ENCODE measurements at regions of chr6 and their contacts with region 1.

Region 1: DNA sequence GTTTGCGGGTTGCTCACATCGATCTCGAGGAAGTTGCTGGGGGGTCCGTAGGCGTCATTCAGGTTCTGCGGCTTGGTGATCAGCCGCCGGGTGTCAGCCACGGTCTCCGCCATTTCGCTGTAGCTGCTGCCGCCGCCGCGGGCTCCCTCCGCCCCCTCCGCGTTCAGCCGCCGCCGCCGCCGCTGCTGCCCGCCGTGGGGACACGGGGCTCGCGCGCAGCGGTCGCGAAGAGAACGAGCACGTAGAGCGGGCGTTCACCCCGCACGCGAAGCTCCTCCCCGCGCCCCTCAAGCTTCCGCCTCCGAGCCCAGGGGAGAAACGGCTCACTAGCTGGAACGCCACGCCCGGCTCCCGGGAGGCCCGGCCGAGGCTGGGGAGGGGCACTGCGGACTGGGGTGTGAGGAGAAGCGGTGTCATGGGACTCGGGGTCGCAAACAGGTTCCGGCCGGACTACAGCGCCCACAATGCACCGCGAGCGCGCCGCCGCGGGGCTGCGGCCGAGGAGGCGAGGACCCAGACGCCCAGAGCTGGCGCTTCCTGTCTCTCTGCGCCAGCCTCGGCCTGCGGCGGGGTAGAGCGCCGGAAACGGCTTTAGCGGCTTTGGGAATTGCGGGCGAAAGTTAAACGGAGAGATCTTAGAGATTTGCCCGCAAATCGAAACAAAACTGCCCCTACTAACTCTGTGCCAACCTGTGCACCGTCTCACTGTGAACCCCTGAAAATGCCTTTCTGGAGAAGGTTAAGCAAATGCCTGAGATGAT is at the start of gene SNX3:
- DNase-seq: peak; percentile 99
- ATAC-seq: peak; percentile 90
- H3K4me3 ChIP-seq: peak within 1 kb of the TSS; percentile 95 to 99 (median 96)
- H3K4me3 Mint-ChIP-seq: peak within 1 kb of the TSS; percentile 89
- H3K27ac ChIP-seq: peak within 1 kb of the TSS; percentile 91 to 97
- H3K27ac Mint-ChIP-seq: peak within 1 kb of the TSS; percentile 93
- H3K4me1 ChIP-seq: peaks cover 30 to 35% of the 10 kb centered on the region in 2 donors
- H3K4me1 Mint-ChIP-seq: peaks cover 30% of the 10 kb centered on the region
- H3K27me3 ChIP-seq: no peaks in the 10 kb centered on the region
- H3K27me3 Mint-ChIP-seq: no peaks in the 10 kb centered on the region
- CTCF ChIP-seq: no peak
- total RNA-seq, gene SNX3: 95.3 and 96.0 TPM in 2 replicates

Region 2: DNA sequence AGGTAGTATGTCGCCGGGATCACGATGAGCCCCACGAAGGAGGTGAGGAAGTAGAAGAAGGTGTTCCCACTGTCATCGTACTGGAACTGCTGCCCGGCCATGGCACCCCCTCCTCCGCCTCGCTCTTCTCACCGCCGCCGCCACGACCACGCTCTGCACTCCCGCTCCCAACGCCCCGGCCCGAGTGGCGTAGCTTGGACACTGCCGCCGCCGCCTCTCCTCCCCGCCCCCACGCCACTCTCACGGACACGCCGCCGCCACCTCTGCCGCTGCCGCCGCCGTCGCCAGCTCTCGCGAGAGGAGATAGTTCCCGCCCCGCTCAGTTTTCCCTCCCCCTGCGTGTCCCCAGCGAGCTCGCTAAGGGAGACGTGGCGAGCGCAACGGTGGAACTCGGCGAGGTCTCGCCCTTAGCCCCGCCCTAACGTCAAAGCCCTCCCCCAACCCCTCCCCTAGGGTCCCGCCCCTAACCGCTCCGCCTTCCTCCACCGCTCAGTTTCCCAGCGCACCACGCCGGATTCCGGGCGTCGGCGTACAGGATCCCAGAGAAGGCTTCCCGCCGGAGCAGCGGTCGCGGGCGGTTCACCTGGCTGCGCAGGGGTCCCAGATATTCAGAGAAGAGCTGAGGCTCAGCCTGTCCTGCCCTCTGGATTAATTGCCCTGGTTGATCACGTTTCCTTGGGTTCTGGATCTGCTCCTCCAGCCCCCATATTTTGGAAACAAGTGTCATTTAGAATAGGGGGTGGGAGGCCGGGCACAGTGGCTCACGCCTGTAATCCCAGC is 302.9 kb before region 1 on chr6 and contains the start of gene SEC63:
- CTCF ChIA-PET with region 1: no interaction called
- POLR2A ChIA-PET with region 1: no interaction called
- intact Hi-C with region 1: loop called (anchors 1 kb)
- DNase-seq: peak; percentile 96
- ATAC-seq: peak; percentile 97
- H3K4me3 ChIP-seq: peak within 1 kb of the TSS; percentile 71 to 96 (median 77)
- H3K4me3 Mint-ChIP-seq: peak within 1 kb of the TSS; percentile 94
- H3K27ac ChIP-seq: peak within 1 kb of the TSS; percentile 60 to 73
- H3K27ac Mint-ChIP-seq: peak within 1 kb of the TSS; percentile 94
- H3K4me1 ChIP-seq: peaks cover 12 to 21% of the 10 kb centered on the region in 2 donors
- H3K4me1 Mint-ChIP-seq: peaks cover 27% of the 10 kb centered on the region
- H3K27me3 ChIP-seq: no peaks in the 10 kb centered on the region
- H3K27me3 Mint-ChIP-seq: no peaks in the 10 kb centered on the region
- CTCF ChIP-seq: no peak
- total RNA-seq, gene SEC63: 74.2 and 79.5 TPM in 2 replicates

Region 3: GRCh38 chr6:108113557-108114519 is 147.2 kb before region 1 on chr6:
- CTCF ChIA-PET with region 1: no interaction called
- POLR2A ChIA-PET with region 1: no interaction called
- intact Hi-C with region 1: loop called (anchors 5 kb)
- DNase-seq: peak; percentile 72
- ATAC-seq: no peak
- H3K4me3 ChIP-seq: peak overlapping the region in 2 of 5 experiments; percentile 15 to 31
- H3K4me3 Mint-ChIP-seq: peak overlapping the region; percentile 85
- H3K27ac ChIP-seq: no peak overlapping the region
- H3K27ac Mint-ChIP-seq: no peak overlapping the region
- H3K4me1 ChIP-seq: peaks cover 45 to 51% of the 10 kb centered on the region in 2 donors
- H3K4me1 Mint-ChIP-seq: peaks cover 44% of the 10 kb centered on the region
- H3K27me3 ChIP-seq: peaks cover 0 to 72% (median 63%) of the 10 kb centered on the region in 4 experiments
- H3K27me3 Mint-ChIP-seq: peaks cover 71% of the 10 kb centered on the region
- CTCF ChIP-seq: peak; percentile 74

Region 4: GRCh38 chr6:108294727-108295625 is 34.0 kb after region 1 on chr6 and contains the start of gene AFG1L:
- CTCF ChIA-PET with region 1: interaction called, 12 read pairs
- POLR2A ChIA-PET with region 1: interaction called, 35 read pairs
- intact Hi-C with region 1: loop called (anchors 1 kb)
- DNase-seq: peak; percentile 93
- ATAC-seq: peak; percentile 90
- H3K4me3 ChIP-seq: peak within 1 kb of the TSS; percentile 84 to 98 (median 95)
- H3K4me3 Mint-ChIP-seq: peak within 1 kb of the TSS; percentile 97
- H3K27ac ChIP-seq: peak within 1 kb of the TSS; percentile 91 to 98
- H3K27ac Mint-ChIP-seq: peak within 1 kb of the TSS; percentile 97
- H3K4me1 ChIP-seq: peaks cover 12 to 16% of the 10 kb centered on the region in 2 donors
- H3K4me1 Mint-ChIP-seq: peaks cover 33% of the 10 kb centered on the region
- H3K27me3 ChIP-seq: no peaks in the 10 kb centered on the region
- H3K27me3 Mint-ChIP-seq: no peaks in the 10 kb centered on the region
- CTCF ChIP-seq: no peak
- total RNA-seq, gene AFG1L: 14.2 and 14.4 TPM in 2 replicates

Region 5: GRCh38 chr6:108453597-108454185 is 192.7 kb after region 1 on chr6:
- CTCF ChIA-PET with region 1: interaction called, 4 read pairs
- POLR2A ChIA-PET with region 1: no interaction called
- intact Hi-C with region 1: loop called (anchors 5 kb)
- DNase-seq: peak; percentile 35
- ATAC-seq: peak; percentile 54
- H3K4me3 ChIP-seq: no peak overlapping the region
- H3K4me3 Mint-ChIP-seq: peak overlapping the region; percentile 54
- H3K27ac ChIP-seq: peak overlapping the region in 1 of 2 donors; percentile 31
- H3K27ac Mint-ChIP-seq: peak overlapping the region; percentile 64
- H3K4me1 ChIP-seq: peaks cover 7 to 8% of the 10 kb centered on the region in 2 donors
- H3K4me1 Mint-ChIP-seq: peaks cover 8% of the 10 kb centered on the region
- H3K27me3 ChIP-seq: no peaks in the 10 kb centered on the region
- H3K27me3 Mint-ChIP-seq: no peaks in the 10 kb centered on the region
- CTCF ChIP-seq: no peak

Region 6: DNA sequence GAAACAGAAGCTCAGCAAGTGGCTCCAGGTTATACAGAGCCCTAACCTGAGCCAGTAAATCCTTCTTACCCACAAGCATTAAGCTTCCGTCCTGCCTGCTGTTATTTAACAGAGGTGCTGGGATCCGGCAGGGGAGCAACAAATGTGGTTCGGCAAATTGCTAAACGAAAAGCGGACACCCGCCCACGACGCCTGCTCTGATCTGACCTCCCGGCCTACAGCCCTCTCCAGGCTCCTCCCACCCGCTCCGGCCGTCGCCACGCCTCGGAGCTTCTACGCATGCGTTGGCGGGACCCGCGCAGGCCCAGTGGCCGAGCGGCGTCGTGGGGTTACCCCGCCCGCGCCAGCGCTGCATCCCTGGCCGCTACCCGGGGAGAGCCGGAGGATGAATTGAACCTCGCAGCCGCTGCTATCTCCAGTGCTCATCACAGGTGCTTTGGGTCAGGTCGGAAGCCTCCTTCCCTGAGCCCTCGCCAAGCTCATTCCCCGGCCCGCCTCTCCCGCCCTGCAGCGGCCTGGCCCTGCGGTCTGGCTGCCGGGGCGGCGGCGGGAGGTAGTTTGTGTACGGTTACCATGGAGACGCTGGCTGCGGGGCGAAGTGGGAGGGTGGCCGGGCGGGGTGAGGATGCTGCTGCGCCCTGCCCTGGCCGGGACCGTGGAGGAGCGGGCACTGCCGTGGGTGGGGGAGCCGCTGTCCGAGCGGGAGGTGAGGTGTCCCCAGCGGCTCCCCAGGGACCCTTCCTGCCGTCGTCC is 587.3 kb after region 1 on chr6 and contains the start of gene ARMC2:
- CTCF ChIA-PET with region 1: no interaction called
- POLR2A ChIA-PET with region 1: no interaction called
- intact Hi-C with region 1: loop called (anchors 1 kb)
- DNase-seq: peak; percentile 95
- ATAC-seq: peak; percentile 93
- H3K4me3 ChIP-seq: peak within 1 kb of the TSS; percentile 53 to 85 (median 78)
- H3K4me3 Mint-ChIP-seq: peak within 1 kb of the TSS; percentile 93
- H3K27ac ChIP-seq: peak within 1 kb of the TSS; percentile 48 to 77
- H3K27ac Mint-ChIP-seq: peak within 1 kb of the TSS; percentile 94
- H3K4me1 ChIP-seq: peaks cover 9 to 12% of the 10 kb centered on the region in 2 donors
- H3K4me1 Mint-ChIP-seq: peaks cover 13% of the 10 kb centered on the region
- H3K27me3 ChIP-seq: peaks cover 0 to 2% (median 0%) of the 10 kb centered on the region in 4 experiments
- H3K27me3 Mint-ChIP-seq: no peaks in the 10 kb centered on the region
- CTCF ChIP-seq: no peak
- total RNA-seq, gene ARMC2: 4.9 and 9.9 TPM in 2 replicates

Measured in B cell (primary cell).